ENCODE measurements at regions of chr13 and their contacts with region 1.

Region 1: GRCh38 chr13:41492404-41493260 is 35.3 kb downstream of the RGCC start:
- DNase-seq: no peak
- ATAC-seq: peak; percentile 77
- H3K4me3 Mint-ChIP-seq: peak overlapping the region; percentile 63
- H3K27ac Mint-ChIP-seq: peak overlapping the region; percentile 90
- H3K4me1 Mint-ChIP-seq: peaks cover 37% of the 10 kb centered on the region
- H3K27me3 Mint-ChIP-seq: no peaks in the 10 kb centered on the region
- CTCF ChIP-seq: no peak

Region 2: GRCh38 chr13:40362502-40362901 is 1130.1 kb before region 1 on chr13:
- CTCF ChIA-PET with region 1: no interaction called
- POLR2A ChIA-PET with region 1: no interaction called
- intact Hi-C with region 1: no loop called
- DNase-seq: no peak
- ATAC-seq: no peak
- H3K4me3 Mint-ChIP-seq: no peak overlapping the region
- H3K27ac Mint-ChIP-seq: no peak overlapping the region
- H3K4me1 Mint-ChIP-seq: peaks cover 9% of the 10 kb centered on the region
- H3K27me3 Mint-ChIP-seq: no peaks in the 10 kb centered on the region
- CTCF ChIP-seq: no peak

Region 3: GRCh38 chr13:41193919-41194824 is 298.5 kb before region 1 on chr13 and contains the start of gene KBTBD7:
- CTCF ChIA-PET with region 1: no interaction called
- POLR2A ChIA-PET with region 1: no interaction called
- intact Hi-C with region 1: no loop called
- DNase-seq: peak; percentile 85
- ATAC-seq: peak; percentile 92
- H3K4me3 Mint-ChIP-seq: peak within 1 kb of the TSS; percentile 93
- H3K27ac Mint-ChIP-seq: peak within 1 kb of the TSS; percentile 94
- H3K4me1 Mint-ChIP-seq: peaks cover 54% of the 10 kb centered on the region
- H3K27me3 Mint-ChIP-seq: no peaks in the 10 kb centered on the region
- CTCF ChIP-seq: no peak
- total RNA-seq, gene KBTBD7: 5.2 and 6.4 TPM in 2 replicates

Region 4: DNA sequence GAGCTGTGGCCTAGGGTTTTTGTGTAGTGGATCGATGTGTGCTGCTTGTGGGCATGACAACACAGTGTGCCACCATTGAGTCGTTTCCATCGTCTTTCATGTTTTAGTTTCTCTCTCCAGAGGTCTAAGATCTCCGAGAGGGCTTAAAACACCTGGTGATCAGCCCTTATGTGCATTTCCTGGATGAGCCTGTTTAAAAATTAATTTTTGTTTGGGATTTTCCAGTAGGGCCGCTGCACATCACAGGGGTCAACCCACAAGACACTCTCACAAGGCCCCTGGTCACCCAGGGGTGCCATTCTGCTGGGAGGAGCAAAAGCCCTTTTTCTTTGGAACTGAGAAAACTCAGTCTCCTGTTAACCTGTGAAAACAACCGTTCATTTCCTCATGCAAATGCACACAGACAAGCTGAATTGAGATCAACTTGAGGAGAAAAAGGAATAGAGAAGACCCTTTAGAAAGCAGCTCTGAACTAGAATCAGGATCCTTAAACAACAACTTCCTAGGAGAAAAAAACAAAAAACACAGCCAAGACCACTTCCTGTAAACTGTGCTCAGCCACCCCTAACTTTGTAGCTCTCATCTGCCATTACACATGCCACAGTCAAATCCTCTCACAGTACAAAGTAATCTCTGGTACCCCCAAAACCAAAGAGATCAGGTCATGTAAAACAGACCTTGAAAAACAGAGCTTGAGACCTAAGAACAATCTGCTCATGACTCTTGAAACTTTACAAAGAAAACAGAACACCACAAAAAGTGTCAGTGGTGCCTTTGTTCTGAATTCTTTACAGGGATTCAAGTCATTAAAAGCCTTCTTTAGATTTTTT is 221.0 kb before region 1 on chr13:
- CTCF ChIA-PET with region 1: no interaction called
- POLR2A ChIA-PET with region 1: no interaction called
- intact Hi-C with region 1: no loop called
- DNase-seq: no peak
- ATAC-seq: no peak
- H3K4me3 Mint-ChIP-seq: no peak overlapping the region
- H3K27ac Mint-ChIP-seq: peak overlapping the region; percentile 36
- H3K4me1 Mint-ChIP-seq: peaks cover 12% of the 10 kb centered on the region
- H3K27me3 Mint-ChIP-seq: no peaks in the 10 kb centered on the region
- CTCF ChIP-seq: no peak

Region 5: DNA sequence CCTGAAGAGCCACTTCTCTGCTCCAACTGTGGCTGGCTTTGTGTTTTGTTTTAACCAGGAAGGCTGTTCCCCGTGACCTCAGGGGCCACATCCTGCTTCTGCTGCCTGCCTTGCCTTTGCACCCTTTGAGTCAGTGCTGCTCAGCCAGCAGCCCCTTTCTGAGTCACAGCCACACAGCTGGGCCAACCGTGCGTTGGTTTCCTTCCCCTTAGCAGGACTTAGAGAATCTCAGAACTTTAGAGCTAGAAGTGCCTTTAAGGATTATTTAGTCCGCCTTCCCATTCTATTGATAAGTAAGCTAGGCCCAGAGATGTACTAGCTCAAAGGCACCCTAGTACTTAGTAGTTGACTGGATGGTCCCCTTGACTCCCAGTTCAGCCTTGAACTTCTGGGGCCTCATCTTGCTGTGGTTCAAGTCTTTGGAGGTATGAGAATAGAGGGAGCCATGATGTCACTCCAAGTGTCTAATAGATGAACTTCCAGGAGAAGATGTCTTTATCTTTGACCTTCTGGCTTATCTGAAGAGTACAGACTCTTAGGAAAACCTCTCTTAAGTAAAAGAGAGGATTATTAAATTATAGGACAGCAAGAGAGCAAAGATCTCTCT is 27.3 kb before region 1 on chr13:
- CTCF ChIA-PET with region 1: interaction called, 3 read pairs
- POLR2A ChIA-PET with region 1: interaction called, 13 read pairs
- intact Hi-C with region 1: loop called (anchors 2 kb)
- DNase-seq: peak; percentile 57
- ATAC-seq: peak; percentile 92
- H3K4me3 Mint-ChIP-seq: peak overlapping the region; percentile 47
- H3K27ac Mint-ChIP-seq: peak overlapping the region; percentile 86
- H3K4me1 Mint-ChIP-seq: peaks cover 56% of the 10 kb centered on the region
- H3K27me3 Mint-ChIP-seq: peaks cover 3% of the 10 kb centered on the region
- CTCF ChIP-seq: no peak

Region 6: DNA sequence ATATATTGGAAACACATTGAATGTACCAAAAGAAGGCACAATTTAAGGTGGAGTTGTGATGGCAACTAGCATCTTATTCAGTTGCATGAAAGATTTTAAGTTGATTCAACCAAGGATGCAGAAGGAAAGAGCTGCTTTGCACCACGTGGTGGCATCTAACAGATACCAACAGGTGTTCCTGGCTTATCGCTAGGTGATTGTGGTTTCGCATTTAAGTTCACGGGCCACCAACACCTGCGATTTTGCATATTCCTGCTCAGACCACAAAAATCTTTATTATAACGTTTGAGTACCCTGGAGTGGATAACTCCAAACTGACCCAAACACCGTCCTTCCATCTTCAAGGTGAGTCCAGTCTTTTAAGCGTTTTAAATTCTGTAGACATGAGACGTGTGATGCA is 10.0 kb after region 1 on chr13:
- CTCF ChIA-PET with region 1: interaction called, 5 read pairs
- POLR2A ChIA-PET with region 1: interaction called, 12 read pairs
- intact Hi-C with region 1: loop called (anchors 1 kb)
- DNase-seq: no peak
- ATAC-seq: peak; percentile 45
- H3K4me3 Mint-ChIP-seq: peak overlapping the region; percentile 12
- H3K27ac Mint-ChIP-seq: peak overlapping the region; percentile 2
- H3K4me1 Mint-ChIP-seq: peaks cover 53% of the 10 kb centered on the region
- H3K27me3 Mint-ChIP-seq: no peaks in the 10 kb centered on the region
- CTCF ChIP-seq: no peak

Region 7: DNA sequence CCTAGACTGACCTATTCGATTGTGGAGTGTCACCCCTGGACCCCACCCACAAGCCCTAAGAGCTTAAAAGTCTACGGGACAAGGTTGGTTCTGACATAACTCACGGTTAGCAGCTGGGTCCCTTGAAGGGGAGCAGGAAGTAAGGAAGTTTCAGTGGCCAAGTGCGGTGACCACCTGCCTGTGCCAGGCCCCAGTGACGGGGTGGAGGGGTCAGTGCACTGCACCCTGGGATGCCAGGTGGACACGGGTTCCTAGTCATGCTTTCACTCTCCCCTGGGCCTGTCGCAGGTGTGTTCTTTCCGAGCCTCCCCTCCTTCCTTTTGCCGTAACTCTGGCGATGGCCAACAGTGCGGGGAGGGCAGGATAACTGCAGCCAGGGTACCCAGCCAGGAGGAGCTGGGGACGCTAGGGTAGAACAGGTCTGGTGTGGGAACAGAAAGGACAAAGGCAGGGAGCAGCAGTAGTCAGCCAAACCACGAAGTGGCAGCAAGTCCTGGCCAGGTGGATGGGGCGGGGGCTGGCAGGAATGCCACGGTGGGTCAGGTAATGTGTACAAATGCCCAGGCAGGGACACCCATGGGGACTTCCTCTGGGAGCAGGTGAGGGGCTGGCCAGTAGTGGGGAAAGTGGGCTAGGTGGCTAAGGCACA is 23.0 kb after region 1 on chr13:
- CTCF ChIA-PET with region 1: no interaction called
- POLR2A ChIA-PET with region 1: no interaction called
- intact Hi-C with region 1: no loop called
- DNase-seq: no peak
- ATAC-seq: no peak
- H3K4me3 Mint-ChIP-seq: no peak overlapping the region
- H3K27ac Mint-ChIP-seq: no peak overlapping the region
- H3K4me1 Mint-ChIP-seq: peaks cover 11% of the 10 kb centered on the region
- H3K27me3 Mint-ChIP-seq: no peaks in the 10 kb centered on the region
- CTCF ChIP-seq: no peak

Region 8: DNA sequence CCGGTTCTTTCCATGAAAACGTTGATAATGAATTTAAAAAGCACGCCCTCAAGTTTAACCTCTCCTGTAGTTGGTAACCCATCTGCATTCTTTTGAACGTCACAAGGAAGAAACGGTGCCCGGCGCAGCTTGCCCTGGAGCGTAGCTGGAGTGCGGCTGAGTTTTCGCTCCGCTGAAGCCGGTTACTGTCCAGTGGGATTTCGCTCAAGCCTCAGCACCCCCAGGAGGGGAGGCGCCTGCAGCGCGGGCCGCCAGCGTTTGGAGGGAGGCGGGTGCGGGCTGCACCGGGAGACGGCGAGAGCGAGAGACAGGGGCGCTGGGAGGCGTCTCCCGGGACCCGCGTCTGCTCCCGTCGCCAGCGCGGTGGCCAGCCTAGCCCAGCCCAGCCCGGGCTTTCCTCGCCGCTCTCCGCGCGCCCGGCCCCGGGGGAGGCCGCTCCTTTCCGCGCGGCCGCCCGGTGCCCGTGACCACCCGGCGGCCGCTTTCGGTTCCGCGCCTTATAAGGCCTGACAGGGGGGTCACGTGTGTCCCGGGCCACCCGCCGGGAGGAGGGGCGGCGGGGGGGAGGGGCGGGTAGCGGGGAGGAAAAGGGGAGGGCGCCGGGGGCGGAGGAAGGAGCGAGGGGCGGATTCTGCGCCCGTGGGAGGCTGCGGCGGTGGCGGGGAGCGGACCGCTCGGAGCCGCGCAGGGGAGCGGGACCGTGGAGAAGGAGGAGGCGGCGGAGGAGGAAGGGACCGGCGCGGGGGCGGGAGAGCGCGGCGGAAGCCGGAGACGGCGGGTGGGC is 547.5 kb after region 1 on chr13:
- CTCF ChIA-PET with region 1: no interaction called
- POLR2A ChIA-PET with region 1: no interaction called
- intact Hi-C with region 1: loop called (anchors 10 kb)
- DNase-seq: peak; percentile 78
- ATAC-seq: peak; percentile 82
- H3K4me3 Mint-ChIP-seq: peak overlapping the region; percentile 90
- H3K27ac Mint-ChIP-seq: peak overlapping the region; percentile 84
- H3K4me1 Mint-ChIP-seq: peaks cover 16% of the 10 kb centered on the region
- H3K27me3 Mint-ChIP-seq: peaks cover 6% of the 10 kb centered on the region
- CTCF ChIP-seq: no peak